Common myeloid progenitor, CD34-positive (primary cell): ENCODE measurements at regions of chr1 and their contacts with region 1.

Region 1: DNA sequence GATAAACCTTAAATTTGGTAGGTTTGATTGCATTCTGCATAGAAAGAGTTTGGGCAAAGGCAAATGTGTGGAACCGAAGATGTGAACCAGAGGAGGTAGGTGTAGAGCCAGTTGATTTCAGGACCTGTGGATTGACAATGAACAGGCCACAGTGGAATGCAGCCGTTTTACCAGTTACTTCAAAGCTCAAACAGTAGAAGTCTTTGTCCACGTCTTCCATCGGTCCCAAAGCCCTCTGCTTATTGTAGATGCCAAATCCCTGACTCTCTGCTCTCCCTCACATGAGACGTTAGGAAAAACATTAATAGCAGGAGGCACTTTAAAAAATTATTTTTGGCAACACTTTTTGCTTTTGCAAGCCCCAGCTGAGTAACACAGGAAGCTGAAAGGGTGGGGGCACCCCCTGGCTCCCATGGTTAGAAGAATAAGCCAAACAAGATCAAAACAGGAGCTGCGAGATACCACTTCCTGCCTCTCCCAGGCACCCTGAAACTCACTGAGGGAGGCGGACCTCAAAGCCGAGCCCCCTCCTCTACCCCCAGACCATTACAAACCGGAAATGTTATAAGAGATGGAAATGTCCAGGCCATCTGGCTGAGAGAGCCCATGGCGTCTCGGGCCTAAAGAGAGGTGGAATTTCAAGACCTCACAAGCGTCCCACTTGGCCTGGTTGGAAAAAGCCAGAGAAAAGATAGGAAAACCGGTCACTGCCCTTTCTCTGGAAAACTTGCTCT is 13.5 kb downstream of the TRAF3IP3 start:
- DNase-seq: peak; percentile 31 to 76 (median 69)
- H3K4me3 ChIP-seq: peak overlapping the region in 6 of 7 experiments; percentile 27 to 68 (median 49)
- H3K27ac ChIP-seq: peak overlapping the region; percentile 62 to 87
- H3K4me1 ChIP-seq: peaks cover 26 to 67% (median 54%) of the 10 kb centered on the region in 4 experiments
- H3K27me3 ChIP-seq: no peaks in the 10 kb centered on the region

Region 2: GRCh38 chr1:209674957-209675564 is 94.3 kb before region 1 on chr1 and contains the start of gene G0S2:
- CTCF ChIA-PET with region 1: no interaction called
- POLR2A ChIA-PET with region 1: no interaction called
- DNase-seq: peak in 2 of 3 donors; percentile 37 to 51
- H3K4me3 ChIP-seq: peak within 1 kb of the TSS in 6 of 7 experiments; percentile 21 to 66 (median 65)
- H3K27ac ChIP-seq: no peak within 1 kb of the TSS
- H3K4me1 ChIP-seq: peaks cover 10 to 25% (median 18%) of the 10 kb centered on the region in 4 experiments
- H3K27me3 ChIP-seq: peaks cover 6 to 85% (median 49%) of the 10 kb centered on the region in 5 experiments

Region 3: DNA sequence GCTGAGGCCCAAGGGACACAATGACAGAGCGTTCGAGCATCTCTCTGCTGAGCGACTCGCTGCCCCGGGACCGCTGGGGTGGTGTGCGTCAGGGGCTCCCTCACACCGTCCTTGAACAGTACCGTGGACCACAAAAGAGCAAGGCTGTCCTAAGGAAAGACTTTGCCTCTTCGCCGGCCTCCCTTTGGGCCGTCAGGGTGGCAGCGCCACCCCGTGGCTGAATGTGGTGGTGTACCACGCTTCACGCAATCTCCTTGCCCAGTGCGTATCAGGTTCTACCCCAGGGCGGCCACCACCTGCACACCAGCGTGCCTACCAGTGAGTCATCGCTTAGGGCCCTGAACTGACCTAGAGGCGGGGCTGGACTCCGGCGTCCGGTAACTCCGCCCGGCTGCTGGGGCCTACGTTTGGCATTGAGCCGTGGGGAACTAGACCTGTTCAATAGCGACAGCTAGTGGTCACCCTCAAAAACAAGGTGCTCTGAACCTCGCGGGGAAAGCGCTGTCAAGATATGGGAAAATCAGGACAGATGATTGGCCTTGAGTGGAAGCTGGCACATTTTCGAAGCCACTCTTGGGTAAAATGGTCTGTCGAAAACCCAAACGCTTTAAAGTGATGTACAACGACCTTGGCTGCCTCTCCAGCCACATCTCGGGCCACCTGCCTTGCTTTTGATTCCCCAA is 21.6 kb before region 1 on chr1:
- CTCF ChIA-PET with region 1: interaction called, 28 read pairs
- POLR2A ChIA-PET with region 1: interaction called, 3 read pairs
- DNase-seq: peak; percentile 85 to 88 (median 85)
- H3K4me3 ChIP-seq: peak overlapping the region; percentile 9 to 75 (median 52)
- H3K27ac ChIP-seq: peak overlapping the region in 1 of 2 experiments; percentile 38
- H3K4me1 ChIP-seq: peaks cover 5 to 34% (median 22%) of the 10 kb centered on the region in 4 experiments
- H3K27me3 ChIP-seq: no peaks in the 10 kb centered on the region

Region 4: GRCh38 chr1:209755926-209756614 is 13.3 kb before region 1 on chr1 and contains the start of gene TRAF3IP3:
- CTCF ChIA-PET with region 1: interaction called, 54 read pairs
- POLR2A ChIA-PET with region 1: no interaction called
- DNase-seq: peak; percentile 85 to 97 (median 95)
- H3K4me3 ChIP-seq: peak within 1 kb of the TSS; percentile 18 to 82 (median 63)
- H3K27ac ChIP-seq: peak within 1 kb of the TSS; percentile 26 to 77
- H3K4me1 ChIP-seq: peaks cover 32 to 62% (median 57%) of the 10 kb centered on the region in 4 experiments
- H3K27me3 ChIP-seq: no peaks in the 10 kb centered on the region